ENCODE measurements at regions of chr18 and their contacts with region 1.

Region 1: DNA sequence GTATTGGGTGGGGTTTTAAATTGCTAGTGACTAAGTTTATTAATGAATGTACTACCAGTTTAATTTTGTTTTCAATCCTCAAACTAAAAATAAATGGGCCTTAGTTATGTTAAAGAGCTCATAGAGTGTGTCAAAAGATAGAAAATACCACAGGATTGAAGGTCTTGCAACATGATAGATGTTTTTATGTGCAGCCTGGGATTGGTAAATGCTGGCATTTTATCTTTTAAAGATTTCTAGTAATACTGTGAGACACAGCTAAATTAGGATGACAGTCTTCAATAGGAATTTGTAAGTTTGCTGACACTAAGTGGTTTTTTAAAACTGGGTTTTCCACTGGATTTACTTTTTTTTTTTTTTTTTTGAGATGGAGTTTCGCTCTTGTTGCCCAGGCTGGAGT is 122.3 kb downstream of the HAUS1 start:
- DNase-seq: no peak
- ATAC-seq: no peak
- H3K4me3 ChIP-seq: no peak overlapping the region
- H3K4me3 Mint-ChIP-seq: no peak overlapping the region
- H3K27ac ChIP-seq: no peak overlapping the region
- H3K27ac Mint-ChIP-seq: no peak overlapping the region
- H3K4me1 ChIP-seq: peaks cover 40% of the 10 kb centered on the region
- H3K4me1 Mint-ChIP-seq: peaks cover 64% of the 10 kb centered on the region
- H3K27me3 ChIP-seq: no peaks in the 10 kb centered on the region
- H3K27me3 Mint-ChIP-seq: no peaks in the 10 kb centered on the region
- CTCF ChIP-seq: no peak

Region 2: DNA sequence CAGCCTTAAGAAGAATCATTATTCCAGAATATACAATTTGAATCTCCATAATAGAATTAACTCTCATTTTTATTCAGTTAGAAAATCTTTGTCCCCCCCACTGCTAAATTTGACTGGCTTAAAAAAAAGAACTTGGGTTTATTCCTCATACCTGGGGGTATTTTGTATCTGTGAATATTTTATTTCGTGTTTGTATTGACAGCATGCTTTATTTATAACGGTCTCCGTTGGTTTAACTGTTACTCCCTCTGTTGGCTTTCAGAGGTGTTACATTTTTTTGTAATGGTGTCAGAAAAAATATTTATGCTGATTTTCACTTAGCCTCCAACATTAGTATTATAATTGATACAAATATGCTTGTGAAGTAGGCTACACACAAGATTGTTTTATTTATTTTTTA is 13.2 kb before region 1 on chr18:
- CTCF ChIA-PET with region 1: interaction called, 3 read pairs
- POLR2A ChIA-PET with region 1: no interaction called
- intact Hi-C with region 1: loop called in 1 of 2 experiments (anchors 2 kb)
- DNase-seq: peak in 2 of 9 experiments; percentile 44 to 62
- ATAC-seq: peak; percentile 63
- H3K4me3 ChIP-seq: no peak overlapping the region
- H3K4me3 Mint-ChIP-seq: peak overlapping the region; percentile 30
- H3K27ac ChIP-seq: no peak overlapping the region
- H3K27ac Mint-ChIP-seq: no peak overlapping the region
- H3K4me1 ChIP-seq: peaks cover 53% of the 10 kb centered on the region
- H3K4me1 Mint-ChIP-seq: peaks cover 82% of the 10 kb centered on the region
- H3K27me3 ChIP-seq: no peaks in the 10 kb centered on the region
- H3K27me3 Mint-ChIP-seq: no peaks in the 10 kb centered on the region
- CTCF ChIP-seq: peak; percentile 85

Region 3: GRCh38 chr18:46239549-46239948 is 13.1 kb after region 1 on chr18:
- CTCF ChIA-PET with region 1: no interaction called
- POLR2A ChIA-PET with region 1: interaction called, 3 read pairs
- intact Hi-C with region 1: loop called in 1 of 2 experiments (anchors 2 kb)
- DNase-seq: no peak
- ATAC-seq: no peak
- H3K4me3 ChIP-seq: no peak overlapping the region
- H3K4me3 Mint-ChIP-seq: no peak overlapping the region
- H3K27ac ChIP-seq: no peak overlapping the region
- H3K27ac Mint-ChIP-seq: no peak overlapping the region
- H3K4me1 ChIP-seq: no peaks in the 10 kb centered on the region
- H3K4me1 Mint-ChIP-seq: peaks cover 54% of the 10 kb centered on the region
- H3K27me3 ChIP-seq: no peaks in the 10 kb centered on the region
- H3K27me3 Mint-ChIP-seq: no peaks in the 10 kb centered on the region
- CTCF ChIP-seq: no peak

Region 4: DNA sequence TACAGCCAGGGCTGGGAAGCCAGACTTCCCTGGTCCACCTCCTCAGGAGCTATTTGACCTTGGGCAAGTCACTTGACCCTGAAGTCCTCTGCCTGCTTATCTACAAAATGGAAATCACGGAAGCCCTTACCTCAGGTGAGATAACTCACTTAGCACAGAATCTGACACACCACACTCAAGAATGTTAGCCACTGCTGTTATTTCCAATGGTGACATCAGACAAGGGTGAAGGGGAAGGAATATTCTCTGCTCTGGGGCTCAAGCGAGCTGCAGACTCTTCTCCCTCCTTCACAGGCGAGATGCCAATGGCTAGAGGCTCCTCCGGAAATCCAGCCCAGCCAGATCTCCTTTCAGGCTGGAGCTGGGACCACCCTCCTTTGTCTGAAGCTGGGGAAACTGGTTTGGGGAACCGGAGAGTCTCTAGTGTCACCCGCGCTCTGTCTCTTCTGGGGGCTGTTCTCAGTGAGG is 67.3 kb after region 1 on chr18:
- CTCF ChIA-PET with region 1: no interaction called
- POLR2A ChIA-PET with region 1: no interaction called
- intact Hi-C with region 1: no loop called
- DNase-seq: no peak
- ATAC-seq: no peak
- H3K4me3 ChIP-seq: no peak overlapping the region
- H3K4me3 Mint-ChIP-seq: no peak overlapping the region
- H3K27ac ChIP-seq: no peak overlapping the region
- H3K27ac Mint-ChIP-seq: no peak overlapping the region
- H3K4me1 ChIP-seq: no peaks in the 10 kb centered on the region
- H3K4me1 Mint-ChIP-seq: peaks cover 2% of the 10 kb centered on the region
- H3K27me3 ChIP-seq: no peaks in the 10 kb centered on the region
- H3K27me3 Mint-ChIP-seq: no peaks in the 10 kb centered on the region
- CTCF ChIP-seq: no peak

Region 5: DNA sequence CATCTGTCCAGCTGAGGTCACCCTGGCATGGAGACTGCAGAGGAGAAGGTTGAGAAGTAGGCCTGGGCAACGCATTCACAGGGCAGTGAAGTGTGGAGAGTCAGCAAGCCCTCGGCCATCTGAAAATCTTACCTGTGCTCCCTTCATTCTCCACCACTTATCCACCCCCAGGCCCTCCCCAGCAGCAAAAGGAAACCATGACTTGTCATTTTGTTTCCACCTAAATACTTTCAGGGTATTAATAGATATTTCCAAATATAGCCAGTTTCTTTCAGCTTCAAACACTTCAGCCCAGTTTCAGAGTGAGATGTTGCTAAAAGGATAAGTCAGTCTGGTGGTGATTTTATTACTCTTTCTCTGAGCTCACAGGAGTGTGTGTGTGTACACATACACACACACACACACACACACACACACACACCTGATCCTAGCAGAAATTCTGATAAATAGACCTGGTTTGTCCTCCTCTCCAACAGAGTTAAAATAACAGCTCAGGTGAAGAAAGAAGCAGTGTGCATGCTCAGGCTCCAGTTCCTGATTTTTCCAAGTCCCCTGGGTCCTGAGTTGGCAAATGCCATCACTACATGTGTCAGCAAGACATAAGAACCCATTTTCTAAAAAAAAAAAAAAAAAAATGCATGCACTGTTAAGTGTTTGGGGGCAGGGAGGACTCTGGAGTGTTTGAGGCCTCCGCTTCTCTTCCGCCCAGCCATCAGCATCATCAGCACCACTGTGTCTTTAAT is 347.7 kb after region 1 on chr18:
- CTCF ChIA-PET with region 1: no interaction called
- POLR2A ChIA-PET with region 1: no interaction called
- intact Hi-C with region 1: no loop called
- DNase-seq: no peak
- ATAC-seq: no peak
- H3K4me3 ChIP-seq: no peak overlapping the region
- H3K4me3 Mint-ChIP-seq: no peak overlapping the region
- H3K27ac ChIP-seq: no peak overlapping the region
- H3K27ac Mint-ChIP-seq: no peak overlapping the region
- H3K4me1 ChIP-seq: no peaks in the 10 kb centered on the region
- H3K4me1 Mint-ChIP-seq: no peaks in the 10 kb centered on the region
- H3K27me3 ChIP-seq: no peaks in the 10 kb centered on the region
- H3K27me3 Mint-ChIP-seq: peaks cover 4% of the 10 kb centered on the region
- CTCF ChIP-seq: no peak